Sciatic nerve (tissue), 2 donors: ENCODE measurements at regions of chr1 and their contacts with region 1.

Region 1: GRCh38 chr1:8465013-8465412 is 147.1 kb downstream of the SLC45A1 start:
- DNase-seq: no peak
- ATAC-seq: peak; percentile 61

Region 2: DNA sequence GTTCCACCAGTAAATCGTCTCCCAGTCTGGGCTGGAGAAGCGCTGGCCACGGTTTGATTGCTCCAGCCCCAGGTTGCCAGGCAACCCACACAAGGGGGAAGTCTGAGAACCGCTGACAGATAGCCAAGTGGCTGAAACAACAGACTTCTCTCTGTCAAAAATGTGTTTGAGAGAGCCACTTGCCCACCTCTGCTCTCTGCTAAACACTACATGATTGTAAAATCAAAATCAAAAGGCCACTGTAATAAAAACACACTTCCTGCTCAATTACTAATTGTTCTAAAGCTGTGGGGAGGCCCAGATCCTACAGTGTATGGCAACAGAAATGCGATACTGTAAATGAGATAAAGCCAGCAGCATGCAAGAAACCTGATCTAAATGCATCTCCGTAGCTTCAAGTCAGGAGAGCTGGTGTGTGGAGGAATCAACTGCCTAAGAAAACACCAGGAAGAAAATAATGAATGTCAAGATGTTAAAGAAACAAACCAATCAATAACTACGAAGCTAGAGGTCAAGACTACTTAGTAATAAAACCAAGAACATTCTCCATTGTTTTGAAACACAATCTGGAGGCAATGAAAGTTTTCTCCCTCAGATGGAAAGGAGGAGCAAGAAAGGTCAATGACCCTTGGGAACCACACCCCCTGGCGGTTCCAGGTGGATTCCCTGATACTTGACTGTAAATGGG is 25.9 kb before region 1 on chr1:
- intact Hi-C with region 1: no loop called
- DNase-seq: peak; percentile 90
- ATAC-seq: peak; percentile 97

Region 3: DNA sequence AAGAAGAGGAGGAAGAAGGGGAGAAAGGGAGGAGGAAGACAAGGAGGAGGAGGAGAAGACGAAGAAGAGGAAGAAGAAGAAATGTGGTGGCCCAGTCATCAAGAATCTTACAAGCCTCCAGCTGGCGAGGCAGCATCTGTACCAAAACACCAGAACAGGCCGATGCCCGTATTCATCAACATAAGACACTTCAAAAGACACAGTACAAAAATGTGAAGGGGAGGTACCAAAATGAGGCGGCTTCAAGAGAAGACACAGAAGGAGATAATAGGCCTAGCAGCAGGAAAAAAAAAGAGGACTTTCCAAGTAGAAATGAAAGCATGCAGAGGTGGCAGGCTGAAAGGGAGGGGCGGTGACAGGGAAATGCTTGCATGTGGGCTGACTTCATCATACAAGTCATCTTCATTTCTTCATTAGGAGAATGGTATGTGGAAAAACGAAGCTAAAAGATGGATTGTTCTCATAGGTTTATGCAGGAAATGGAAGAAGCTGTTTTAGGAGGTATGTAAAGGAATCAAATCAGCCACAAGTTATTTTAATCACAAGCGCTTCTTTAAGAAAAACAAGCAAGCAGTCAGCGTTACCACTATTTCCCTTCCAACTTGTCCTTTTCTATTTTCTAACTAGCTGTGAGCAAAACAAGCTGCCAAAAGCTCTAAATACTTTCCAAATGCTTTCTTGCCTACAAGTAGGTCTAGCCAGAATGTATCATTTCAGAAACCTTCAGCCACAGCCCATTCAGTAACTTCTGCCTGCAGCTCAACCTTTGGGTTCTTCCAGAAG is 45.2 kb after region 1 on chr1:
- intact Hi-C with region 1: loop called (anchors 5 kb)
- DNase-seq: no peak
- ATAC-seq: peak; percentile 81